ENCODE measurements at regions of chr1 and their contacts with region 1.

Region 1: DNA sequence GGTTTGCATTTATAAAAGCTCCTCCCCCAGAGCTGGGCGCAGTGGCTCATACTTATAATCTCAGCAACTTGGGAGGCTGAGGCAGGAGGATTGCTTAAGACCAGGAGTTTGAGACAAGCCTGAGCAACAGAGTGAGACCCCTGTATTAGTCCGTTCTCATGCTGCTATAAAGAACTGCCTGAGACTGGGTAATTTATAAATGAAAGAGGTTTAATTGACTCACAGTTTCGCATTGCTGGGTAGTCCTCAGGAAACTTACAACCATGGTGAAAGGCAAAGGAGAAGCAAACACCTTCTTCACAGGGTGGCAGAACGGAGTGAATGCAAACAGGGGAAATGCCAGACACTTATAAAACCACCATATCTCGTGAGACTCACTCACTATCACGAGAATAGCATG is 52.5 kb downstream of the ZNF684 start:
- DNase-seq: peak; percentile 22
- H3K4me3 Mint-ChIP-seq: no peak overlapping the region
- H3K27ac Mint-ChIP-seq: no peak overlapping the region
- H3K4me1 Mint-ChIP-seq: peaks cover 9% of the 10 kb centered on the region
- H3K27me3 Mint-ChIP-seq: no peaks in the 10 kb centered on the region

Region 2: GRCh38 chr1:40625066-40625465 is 41.1 kb after region 1 on chr1:
- CTCF ChIA-PET with region 1: no interaction called
- POLR2A ChIA-PET with region 1: no interaction called
- intact Hi-C with region 1: loop called (anchors 2 kb)
- DNase-seq: peak; percentile 45
- H3K4me3 Mint-ChIP-seq: no peak overlapping the region
- H3K27ac Mint-ChIP-seq: no peak overlapping the region
- H3K4me1 Mint-ChIP-seq: peaks cover 18% of the 10 kb centered on the region
- H3K27me3 Mint-ChIP-seq: no peaks in the 10 kb centered on the region

Measured in activated CD4-positive, alpha-beta memory T cell treated with anti-CD3 and anti-CD28 coated beads for 36 hours (primary cell).